Lower leg skin (tissue), 4 donors: ENCODE measurements at regions of chr5 and their contacts with region 1.

Region 1: DNA sequence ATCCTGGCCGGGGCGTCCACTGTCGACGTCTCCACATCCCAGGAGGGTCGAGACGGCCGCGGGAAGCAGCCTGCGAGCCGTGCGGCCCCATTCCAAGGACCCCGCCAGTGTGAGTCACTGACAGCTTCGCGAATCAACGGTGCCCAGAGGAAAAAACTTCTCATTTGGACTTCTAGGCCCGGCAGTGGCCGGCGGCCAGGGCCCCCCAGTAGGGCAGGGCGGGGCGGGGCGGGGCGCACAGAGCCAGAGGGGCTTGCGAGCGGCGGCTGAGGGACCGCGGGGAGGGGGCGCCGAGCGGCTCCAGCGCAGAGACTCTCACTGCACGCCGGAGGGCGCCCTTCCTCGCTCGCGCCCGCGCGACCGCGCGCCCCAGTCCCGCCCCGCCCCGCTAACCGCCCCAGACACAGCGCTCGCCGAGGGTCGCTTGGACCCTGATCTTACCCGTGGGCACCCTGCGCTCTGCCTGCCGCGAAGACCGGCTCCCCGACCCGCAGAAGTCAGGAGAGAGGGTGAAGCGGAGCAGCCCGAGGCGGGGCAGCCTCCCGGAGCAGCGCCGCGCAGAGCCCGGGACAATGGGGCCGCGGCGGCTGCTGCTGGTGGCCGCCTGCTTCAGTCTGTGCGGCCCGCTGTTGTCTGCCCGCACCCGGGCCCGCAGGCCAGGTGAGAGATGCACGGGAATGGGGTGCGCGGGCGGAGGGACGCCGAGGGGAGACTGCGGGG is at the start of gene F2R:
- DNase-seq: peak; percentile 67 to 90
- H3K4me3 ChIP-seq: peak within 1 kb of the TSS; percentile 62
- CTCF ChIP-seq: no peak
- POLR2A ChIP-seq: no peak
- total RNA-seq, gene F2R: 52.4 to 70.9 (median 64.4) TPM

Region 2: DNA sequence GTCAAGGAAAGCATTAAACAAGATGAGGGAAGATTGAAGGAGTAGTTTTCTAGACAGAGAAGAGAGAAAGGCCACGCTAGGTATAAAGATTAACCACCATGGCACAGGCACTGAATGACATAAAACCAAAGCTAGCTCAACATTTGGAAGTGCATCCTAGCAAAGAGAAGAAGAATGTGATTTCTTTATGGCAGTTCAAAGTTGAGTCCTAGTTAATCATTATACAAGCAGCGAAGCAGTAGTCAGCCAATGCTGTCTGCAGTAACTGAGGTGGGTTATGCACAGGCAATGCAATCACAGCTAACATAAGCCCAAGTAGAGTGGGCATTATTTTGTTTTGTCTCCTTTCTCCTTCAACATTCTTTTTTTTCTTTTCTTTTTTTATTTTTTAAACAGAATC is 1455.2 kb before region 1 on chr5:
- intact Hi-C with region 1: loop called (anchors 5 kb)
- DNase-seq: no peak
- H3K4me3 ChIP-seq: no peak overlapping the region
- CTCF ChIP-seq: no peak
- POLR2A ChIP-seq: no peak